HAP-1 (cell line): ENCODE measurements at regions of chr2 and their contacts with region 1.

Region 1: GRCh38 chr2:20650880-20651730 is at the start of gene HS1BP3:
- DNase-seq: peak; percentile 75 to 81
- H3K4me3 ChIP-seq: peak within 1 kb of the TSS; percentile 85
- H3K4me1 ChIP-seq: peaks cover 7% of the 10 kb centered on the region
- H3K27me3 ChIP-seq: no peaks in the 10 kb centered on the region

Region 2: DNA sequence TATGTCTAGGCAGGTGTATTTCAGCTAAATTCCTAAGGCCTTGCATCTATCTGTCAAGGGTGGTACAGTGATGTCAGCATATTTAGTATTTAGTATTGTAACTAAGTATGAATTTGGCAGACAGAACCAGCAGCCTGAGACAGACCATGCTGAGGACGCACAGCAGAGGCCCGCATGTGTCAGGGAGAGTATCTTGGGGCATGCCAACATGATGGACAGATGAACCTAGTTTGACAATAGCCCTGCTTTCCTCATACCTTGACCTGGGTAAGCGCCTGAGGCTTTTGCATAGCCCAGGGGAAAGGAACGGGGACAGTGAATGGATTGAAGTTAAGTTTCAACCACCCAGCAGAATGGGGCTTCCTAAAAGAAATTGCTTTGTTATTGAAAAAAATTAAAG is 1258.9 kb before region 1 on chr2:
- in situ Hi-C with region 1: no loop called
- DNase-seq: no peak
- H3K4me3 ChIP-seq: no peak overlapping the region
- H3K4me1 ChIP-seq: no peaks in the 10 kb centered on the region
- H3K27me3 ChIP-seq: no peaks in the 10 kb centered on the region

Region 3: GRCh38 chr2:21118302-21118920 is 467.3 kb after region 1 on chr2:
- in situ Hi-C with region 1: loop called (anchors 25 kb)
- DNase-seq: peak; percentile 36 to 45
- H3K4me3 ChIP-seq: no peak overlapping the region
- H3K4me1 ChIP-seq: no peaks in the 10 kb centered on the region
- H3K27me3 ChIP-seq: peaks cover 10% of the 10 kb centered on the region

Region 4: GRCh38 chr2:21276163-21276562 is 625.1 kb after region 1 on chr2:
- in situ Hi-C with region 1: no loop called
- DNase-seq: no peak
- H3K4me3 ChIP-seq: no peak overlapping the region
- H3K4me1 ChIP-seq: no peaks in the 10 kb centered on the region; the same call in 1 of the 2 replicates
- H3K27me3 ChIP-seq: no peaks in the 10 kb centered on the region